A673 (cell line): ENCODE measurements at regions of chr10 and their contacts with region 1.

Region 1: GRCh38 chr10:128631801-128632241 is 505.6 kb upstream of the MKI67 start:
- DNase-seq: peak; percentile 69
- H3K4me3 ChIP-seq: no peak overlapping the region
- H3K27ac ChIP-seq: no peak overlapping the region
- H3K4me1 ChIP-seq: peaks cover 10% of the 10 kb centered on the region
- H3K27me3 ChIP-seq: no peaks in the 10 kb centered on the region
- CTCF ChIP-seq: peak; percentile 74

Region 2: GRCh38 chr10:128373071-128373749 is 258.6 kb before region 1 on chr10:
- CTCF ChIA-PET with region 1: no interaction called
- POLR2A ChIA-PET with region 1: no interaction called
- intact Hi-C with region 1: no loop called
- DNase-seq: no peak
- H3K4me3 ChIP-seq: no peak overlapping the region
- H3K27ac ChIP-seq: no peak overlapping the region
- H3K4me1 ChIP-seq: no peaks in the 10 kb centered on the region
- H3K27me3 ChIP-seq: peaks cover 64% of the 10 kb centered on the region
- CTCF ChIP-seq: no peak

Region 3: DNA sequence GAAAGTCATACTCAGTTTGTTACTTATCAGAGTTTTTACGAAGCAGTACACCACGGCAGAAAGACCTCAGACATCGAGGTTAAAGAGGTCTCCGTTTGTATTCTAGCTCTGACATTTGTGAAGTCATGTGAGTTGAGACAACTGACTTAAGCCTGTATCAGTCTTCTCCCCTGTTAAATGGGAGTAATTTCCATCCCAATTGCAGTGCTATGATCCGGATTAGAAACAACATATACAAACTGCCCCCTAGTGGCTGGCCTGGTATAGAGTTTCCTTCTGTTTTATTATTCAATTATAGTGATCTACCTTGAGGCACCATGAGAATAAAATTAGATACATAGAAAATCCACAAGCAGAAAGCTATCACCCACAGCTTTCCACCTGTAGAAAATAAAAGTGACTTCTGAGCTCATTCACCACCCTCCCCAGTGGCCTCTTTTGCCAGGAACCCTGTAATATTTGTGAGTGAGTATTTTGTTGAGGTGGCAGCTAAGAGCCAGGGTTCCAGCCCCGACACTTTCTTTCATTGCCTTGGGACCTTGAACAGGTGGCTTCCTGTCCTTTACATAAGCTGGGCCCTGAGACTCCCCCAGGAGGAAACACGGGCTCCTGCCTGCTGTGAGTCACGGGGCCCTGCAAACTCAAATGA is 228.0 kb after region 1 on chr10:
- CTCF ChIA-PET with region 1: no interaction called
- POLR2A ChIA-PET with region 1: no interaction called
- intact Hi-C with region 1: loop called (anchors 5 kb)
- DNase-seq: peak; percentile 73
- H3K4me3 ChIP-seq: no peak overlapping the region
- H3K27ac ChIP-seq: no peak overlapping the region
- H3K4me1 ChIP-seq: peaks cover 5% of the 10 kb centered on the region
- H3K27me3 ChIP-seq: no peaks in the 10 kb centered on the region
- CTCF ChIP-seq: peak; percentile 86

Region 4: GRCh38 chr10:129023082-129023481 is 391.3 kb after region 1 on chr10:
- CTCF ChIA-PET with region 1: no interaction called
- POLR2A ChIA-PET with region 1: no interaction called
- intact Hi-C with region 1: loop called (anchors 10 kb)
- DNase-seq: no peak
- H3K4me3 ChIP-seq: no peak overlapping the region
- H3K27ac ChIP-seq: no peak overlapping the region
- H3K4me1 ChIP-seq: peaks cover 68% of the 10 kb centered on the region
- H3K27me3 ChIP-seq: no peaks in the 10 kb centered on the region
- CTCF ChIP-seq: no peak